ENCODE measurements at regions of chr5 and their contacts with region 1.

Region 1: GRCh38 chr5:151447174-151448037 is at the start of gene SLC36A1:
- DNase-seq: peak; percentile 93 to 98
- H3K4me3 ChIP-seq: peak within 1 kb of the TSS; percentile 45 to 81 (median 72)
- H3K27ac ChIP-seq: no peak within 1 kb of the TSS
- H3K4me1 ChIP-seq: peaks cover 0 to 10% (median 4%) of the 10 kb centered on the region in 4 experiments; a peak in 4 of 7 replicates
- H3K27me3 ChIP-seq: no peaks in the 10 kb centered on the region
- CTCF ChIP-seq: peak; percentile 76 to 80 (median 78)
- EP300 ChIP-seq: no peak; a peak in 1 of 3 replicates
- POLR2A ChIP-seq: peak in 1 of 2 experiments; percentile 67; a peak in 2 of 3 replicates
- RAD21 ChIP-seq: peak; percentile 64 to 76
- total RNA-seq, gene SLC36A1: 6.6 and 9.1 TPM in 2 replicates

Region 2: DNA sequence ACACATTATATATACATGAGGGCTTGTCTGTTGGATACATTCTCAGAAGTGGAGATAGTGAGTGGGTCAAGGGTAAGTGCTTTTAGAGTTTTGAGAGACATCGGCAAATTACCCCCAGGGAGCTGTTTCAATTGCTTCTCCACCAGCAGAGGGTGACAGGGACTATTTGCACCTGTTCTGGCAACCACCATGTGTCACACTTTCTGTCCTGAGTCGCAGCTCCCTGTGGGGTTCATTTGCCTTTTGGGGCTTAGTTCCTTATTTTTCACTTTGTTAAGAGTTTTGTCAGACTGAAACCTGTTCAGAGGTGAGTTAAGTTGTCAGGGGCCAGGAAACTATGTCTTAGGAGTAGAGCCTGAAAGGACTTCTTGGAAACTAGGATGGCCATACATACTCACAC is 20.1 kb before region 1 on chr5:
- CTCF ChIA-PET with region 1: interaction called, 10 read pairs
- POLR2A ChIA-PET with region 1: interaction called, 3 read pairs
- DNase-seq: no peak
- H3K4me3 ChIP-seq: no peak overlapping the region
- H3K27ac ChIP-seq: no peak overlapping the region
- H3K4me1 ChIP-seq: peaks cover 2 to 5% (median 3%) of the 10 kb centered on the region in 4 experiments; a peak in 6 of 7 replicates
- H3K27me3 ChIP-seq: no peaks in the 10 kb centered on the region
- CTCF ChIP-seq: peak; percentile 7 to 12 (median 12); a peak in 2 of 4 replicates
- EP300 ChIP-seq: no peak
- POLR2A ChIP-seq: no peak
- RAD21 ChIP-seq: no peak; a peak in 1 of 4 replicates

Region 3: GRCh38 chr5:151480384-151481293 is 33.2 kb after region 1 on chr5:
- CTCF ChIA-PET with region 1: interaction called, 11 read pairs
- POLR2A ChIA-PET with region 1: interaction called, 3 read pairs
- DNase-seq: no peak
- H3K4me3 ChIP-seq: no peak overlapping the region
- H3K27ac ChIP-seq: no peak overlapping the region
- H3K4me1 ChIP-seq: peaks cover 0 to 18% (median 11%) of the 10 kb centered on the region in 4 experiments; a peak in 2 of 7 replicates
- H3K27me3 ChIP-seq: no peaks in the 10 kb centered on the region
- CTCF ChIP-seq: no peak
- EP300 ChIP-seq: no peak
- POLR2A ChIP-seq: no peak
- RAD21 ChIP-seq: no peak

Region 4: DNA sequence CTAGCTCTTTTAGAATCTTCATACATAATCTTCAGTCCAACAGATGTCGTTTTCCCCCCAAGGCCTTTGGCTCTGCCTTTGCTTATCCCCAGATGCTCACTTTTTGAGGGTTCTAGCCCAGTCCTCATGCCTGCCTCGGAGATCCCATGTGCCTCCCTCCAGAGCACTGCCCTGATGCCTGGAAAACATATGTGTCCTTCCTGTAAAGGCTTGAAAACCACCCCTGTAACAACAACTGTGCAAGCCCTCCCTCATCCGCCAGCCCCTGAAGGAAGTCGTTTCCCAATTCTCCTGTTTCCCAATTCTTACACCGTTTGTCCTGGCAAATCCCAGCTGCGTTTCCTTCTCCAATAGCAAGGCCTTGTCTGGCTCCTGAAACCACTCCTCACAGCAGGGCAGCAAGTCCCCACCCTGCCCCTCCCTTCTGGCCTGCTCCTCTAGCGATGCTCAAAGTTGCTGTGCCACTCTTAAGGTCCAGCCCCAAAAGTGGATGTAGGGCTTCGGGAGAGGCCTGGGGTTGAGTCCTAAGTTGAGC is 52.2 kb after region 1 on chr5:
- CTCF ChIA-PET with region 1: interaction called, 66 read pairs
- POLR2A ChIA-PET with region 1: interaction called, 4 read pairs
- DNase-seq: no peak
- H3K4me3 ChIP-seq: no peak overlapping the region
- H3K27ac ChIP-seq: no peak overlapping the region
- H3K4me1 ChIP-seq: peaks cover 0 to 4% (median under 1%) of the 10 kb centered on the region in 4 experiments; a peak in 3 of 7 replicates
- H3K27me3 ChIP-seq: no peaks in the 10 kb centered on the region
- CTCF ChIP-seq: no peak
- EP300 ChIP-seq: no peak
- POLR2A ChIP-seq: no peak
- RAD21 ChIP-seq: no peak

Region 5: GRCh38 chr5:151751091-151751490 is 303.7 kb after region 1 on chr5:
- CTCF ChIA-PET with region 1: interaction called, 10 read pairs
- POLR2A ChIA-PET with region 1: no interaction called
- DNase-seq: no peak
- H3K4me3 ChIP-seq: no peak overlapping the region
- H3K27ac ChIP-seq: no peak overlapping the region
- H3K4me1 ChIP-seq: peaks cover 0 to 4% (median 2%) of the 10 kb centered on the region in 4 experiments; a peak in 2 of 7 replicates
- H3K27me3 ChIP-seq: no peaks in the 10 kb centered on the region
- CTCF ChIP-seq: no peak
- EP300 ChIP-seq: no peak
- POLR2A ChIP-seq: no peak
- RAD21 ChIP-seq: no peak

Measured in H1 (cell line).